ENCODE measurements at regions of chr10 and their contacts with region 1.

Region 1: DNA sequence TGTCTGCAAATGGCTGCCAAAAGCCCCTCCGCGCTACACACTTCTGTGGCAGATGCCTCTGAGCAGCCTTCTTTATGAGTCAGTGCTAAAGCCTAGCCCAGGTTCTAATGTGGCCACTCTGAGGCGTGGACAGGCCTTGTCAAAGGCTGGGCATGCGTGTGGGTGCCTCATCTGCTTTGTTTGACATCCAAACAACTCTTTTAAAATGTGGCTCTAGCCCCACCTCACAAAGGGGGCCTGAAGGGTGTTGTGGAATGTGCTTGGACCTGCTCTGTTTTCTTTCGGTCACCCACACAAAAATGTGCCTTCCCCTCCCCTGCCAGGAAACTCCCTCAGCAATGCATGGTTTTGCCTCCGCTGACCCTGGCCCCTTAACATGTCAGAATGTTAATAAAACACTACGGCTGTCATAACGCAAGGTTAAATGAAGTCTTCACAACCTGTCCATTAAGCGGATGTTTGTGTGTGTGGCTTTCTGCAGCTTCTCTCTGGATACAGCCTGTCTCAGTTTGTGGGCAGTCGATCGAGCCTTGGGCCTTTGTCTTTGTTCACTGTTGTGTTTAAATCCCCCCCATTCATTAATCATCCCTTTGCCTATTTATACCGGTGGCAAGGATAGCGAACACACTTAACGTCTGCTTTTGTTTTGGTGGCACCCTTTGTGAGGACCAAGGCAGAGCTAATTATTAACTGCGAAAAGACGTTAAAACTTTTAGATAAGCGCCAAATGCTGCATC is 718.9 kb downstream of the LRMDA start:
- DNase-seq: no peak
- ATAC-seq: no peak
- H3K4me3 ChIP-seq: no peak overlapping the region
- H3K27ac ChIP-seq: peak overlapping the region in 1 of 12 donors; percentile 73
- H3K4me1 ChIP-seq: peaks cover 0 to 3% (median 0%) of the 10 kb centered on the region in 12 donors
- H3K27me3 ChIP-seq: no peaks in the 10 kb centered on the region
- CTCF ChIP-seq: no peak
- POLR2A ChIP-seq: no peak

Region 2: GRCh38 chr10:75932921-75933320 is 217.4 kb before region 1 on chr10:
- intact Hi-C with region 1: loop called in 1 of 10 experiments (anchors 10 kb)
- DNase-seq: no peak
- ATAC-seq: no peak
- H3K4me3 ChIP-seq: no peak overlapping the region
- H3K27ac ChIP-seq: no peak overlapping the region
- H3K4me1 ChIP-seq: peaks cover 0 to 8% (median 0%) of the 10 kb centered on the region in 12 donors
- H3K27me3 ChIP-seq: no peaks in the 10 kb centered on the region
- CTCF ChIP-seq: no peak
- POLR2A ChIP-seq: no peak